Gastrocnemius medialis (tissue), 4 donors: ENCODE measurements at regions of chr6 and their contacts with region 1.

Region 1: DNA sequence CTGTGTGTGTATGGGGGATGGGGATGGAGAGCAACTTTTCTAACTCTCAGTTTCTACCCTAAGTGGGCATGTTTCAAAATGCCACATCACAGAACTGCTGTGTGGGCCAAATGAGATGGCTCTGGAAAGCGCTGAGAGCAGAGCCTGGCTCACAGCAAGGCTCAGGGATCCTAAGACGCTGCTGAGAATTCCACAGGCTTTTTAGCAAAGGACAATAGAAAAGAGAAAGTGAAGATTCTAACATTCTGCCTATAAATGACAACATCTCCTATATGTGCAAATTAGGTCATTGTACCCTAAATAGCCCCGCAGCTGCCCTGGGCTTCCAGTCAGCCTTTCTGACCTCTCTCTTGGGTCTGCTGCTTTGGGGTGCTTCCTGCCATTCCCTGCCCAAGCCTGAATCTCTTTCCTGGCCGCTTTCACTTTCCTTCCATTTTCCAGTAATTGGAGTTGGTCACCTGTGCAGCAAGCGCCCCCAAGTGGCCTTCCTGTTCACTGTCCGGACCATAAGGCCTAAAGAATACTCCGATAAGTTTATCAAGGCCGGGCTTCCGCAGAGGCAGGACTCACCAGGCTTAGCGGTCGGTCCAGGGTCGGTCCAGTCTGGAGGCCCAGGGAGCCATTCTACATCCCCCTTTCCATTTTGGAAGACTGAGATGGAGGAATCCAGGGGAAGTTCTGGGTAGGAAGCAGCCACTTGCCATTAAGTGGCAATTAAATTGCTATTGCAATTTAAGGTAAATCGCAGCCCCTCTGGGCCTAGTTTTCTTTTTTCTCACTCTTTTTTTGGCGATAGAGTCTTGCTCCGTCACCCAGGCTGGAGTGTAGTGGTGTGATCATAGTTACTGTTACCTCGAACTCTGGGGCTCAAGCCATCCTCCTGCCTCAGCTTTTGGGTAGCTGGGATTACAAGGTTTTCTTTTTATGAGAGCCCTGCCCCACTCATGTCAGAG is 6.6 kb upstream of the DDR1 start:
- DNase-seq: peak; percentile 74 to 89
- ATAC-seq: peak; percentile 86 to 88
- H3K4me3 ChIP-seq: peak overlapping the region; percentile 40 to 54 (median 41)
- H3K27ac ChIP-seq: peak overlapping the region; percentile 76 to 80 (median 79)
- H3K4me1 ChIP-seq: peaks cover 20 to 33% of the 10 kb centered on the region in 2 donors
- H3K27me3 ChIP-seq: no peaks in the 10 kb centered on the region
- CTCF ChIP-seq: peak; percentile 89 to 92 (median 91)
- POLR2A ChIP-seq: peak in 1 of 2 donors; percentile 11

Region 2: GRCh38 chr6:30821862-30822782 is 55.6 kb before region 1 on chr6:
- in situ Hi-C with region 1: loop called (anchors 5 to 10 kb)
- intact Hi-C with region 1: loop called (anchors 1 kb)
- DNase-seq: no peak
- ATAC-seq: no peak
- H3K4me3 ChIP-seq: no peak overlapping the region
- H3K27ac ChIP-seq: peak overlapping the region in 2 of 4 donors; percentile 6 to 10
- H3K4me1 ChIP-seq: peaks cover 16 to 23% of the 10 kb centered on the region in 2 donors
- H3K27me3 ChIP-seq: no peaks in the 10 kb centered on the region
- CTCF ChIP-seq: peak; percentile 34 to 54 (median 50)
- POLR2A ChIP-seq: no peak